A549 (cell line): ENCODE measurements at regions of chr19 and their contacts with region 1.

Region 1: DNA sequence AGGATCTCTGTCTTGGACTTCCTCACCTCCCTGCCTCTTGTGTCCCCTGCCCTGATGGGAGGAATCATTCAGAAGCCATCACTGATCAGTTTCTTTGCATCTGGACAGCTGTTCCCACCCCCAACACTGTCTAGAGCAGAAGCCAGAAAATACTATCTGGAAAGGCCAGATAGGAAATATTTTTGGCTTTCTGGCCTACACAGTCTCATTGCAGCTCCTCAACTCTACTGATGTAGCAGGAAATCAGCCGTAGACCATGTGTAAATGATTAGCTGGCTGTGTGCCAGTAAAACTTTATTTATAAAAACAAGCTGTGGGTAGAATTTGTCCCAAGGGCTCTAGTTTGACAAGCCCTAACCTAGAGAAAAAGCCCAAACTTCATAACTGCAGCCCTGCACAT is 5.6 kb downstream of the SIGLEC7 start:
- DNase-seq: no peak
- ATAC-seq: no peak
- H3K4me3 ChIP-seq: no peak overlapping the region
- H3K27ac ChIP-seq: no peak overlapping the region
- H3K4me1 ChIP-seq: no peaks in the 10 kb centered on the region
- CTCF ChIP-seq: no peak
- EP300 ChIP-seq: no peak
- POLR2A ChIP-seq: no peak
- RAD21 ChIP-seq: no peak

Region 2: GRCh38 chr19:51047031-51047335 is 100.7 kb before region 1 on chr19:
- CTCF ChIA-PET with region 1: no interaction called
- POLR2A ChIA-PET with region 1: no interaction called
- DNase-seq: no peak
- ATAC-seq: no peak
- H3K4me3 ChIP-seq: no peak overlapping the region
- H3K27ac ChIP-seq: no peak overlapping the region
- H3K4me1 ChIP-seq: no peaks in the 10 kb centered on the region
- CTCF ChIP-seq: no peak
- EP300 ChIP-seq: no peak
- POLR2A ChIP-seq: no peak
- RAD21 ChIP-seq: no peak

Region 3: GRCh38 chr19:51108066-51108804 is 39.4 kb before region 1 on chr19 and contains the start of gene CTU1:
- CTCF ChIA-PET with region 1: no interaction called
- POLR2A ChIA-PET with region 1: no interaction called
- DNase-seq: peak; percentile 98 to 100
- ATAC-seq: peak; percentile 94 to 98
- H3K4me3 ChIP-seq: peak within 1 kb of the TSS; percentile 66
- H3K27ac ChIP-seq: peak within 1 kb of the TSS; percentile 80 to 88
- H3K4me1 ChIP-seq: peaks cover 10% of the 10 kb centered on the region
- CTCF ChIP-seq: no peak
- EP300 ChIP-seq: no peak
- POLR2A ChIP-seq: peak; percentile 81
- RAD21 ChIP-seq: no peak
- polyA plus RNA-seq, gene CTU1: 4.1 and 4.5 TPM in 2 replicates

Region 4: DNA sequence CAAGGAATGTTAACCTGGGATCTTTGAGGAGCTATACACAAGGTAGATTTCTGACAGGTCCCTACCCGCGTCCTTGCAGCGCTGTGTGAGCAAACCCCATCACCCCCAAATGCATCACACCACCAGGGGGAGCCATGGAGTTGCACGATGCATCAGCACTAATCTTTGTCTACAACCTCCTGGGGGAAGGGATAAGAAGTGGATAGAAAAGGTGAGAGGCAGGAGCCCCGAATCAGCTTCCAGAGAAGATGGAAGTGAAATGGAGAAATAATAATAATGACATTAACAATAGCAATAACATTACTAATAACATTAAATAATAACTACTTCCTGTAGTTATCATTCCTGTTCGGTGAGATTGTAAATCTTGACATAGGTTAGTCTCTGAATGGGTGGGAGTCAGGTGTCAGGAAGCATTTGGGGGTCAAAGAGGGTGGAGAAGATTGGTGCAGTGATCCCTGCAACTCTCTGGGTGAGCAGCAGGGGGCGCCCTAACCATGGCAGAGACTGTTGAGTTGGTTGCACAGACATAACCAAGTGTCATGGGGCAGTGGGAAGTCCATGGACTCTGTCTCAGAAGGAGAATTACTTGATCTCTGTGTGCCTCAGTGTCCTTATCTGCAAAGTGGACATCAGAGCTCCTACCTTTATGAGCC is 10.9 kb after region 1 on chr19:
- CTCF ChIA-PET with region 1: interaction called, 31 read pairs
- POLR2A ChIA-PET with region 1: no interaction called
- DNase-seq: peak; percentile 41 to 67
- ATAC-seq: peak; percentile 51 to 84; a peak in 5 of 6 replicates
- H3K4me3 ChIP-seq: no peak overlapping the region
- H3K27ac ChIP-seq: no peak overlapping the region
- H3K4me1 ChIP-seq: no peaks in the 10 kb centered on the region
- CTCF ChIP-seq: peak; percentile 57
- EP300 ChIP-seq: no peak
- POLR2A ChIP-seq: no peak
- RAD21 ChIP-seq: peak; percentile 50 to 64; a peak in 4 of 5 replicates